A549 (cell line): ENCODE measurements at regions of chr6 and their contacts with region 1.

Region 1: GRCh38 chr6:97198046-97198565 is 84.9 kb downstream of the MMS22L start:
- DNase-seq: no peak
- ATAC-seq: no peak
- H3K4me3 ChIP-seq: no peak overlapping the region
- H3K27ac ChIP-seq: no peak overlapping the region
- H3K4me1 ChIP-seq: no peaks in the 10 kb centered on the region
- CTCF ChIP-seq: no peak
- EP300 ChIP-seq: no peak
- POLR2A ChIP-seq: no peak
- RAD21 ChIP-seq: no peak

Region 2: DNA sequence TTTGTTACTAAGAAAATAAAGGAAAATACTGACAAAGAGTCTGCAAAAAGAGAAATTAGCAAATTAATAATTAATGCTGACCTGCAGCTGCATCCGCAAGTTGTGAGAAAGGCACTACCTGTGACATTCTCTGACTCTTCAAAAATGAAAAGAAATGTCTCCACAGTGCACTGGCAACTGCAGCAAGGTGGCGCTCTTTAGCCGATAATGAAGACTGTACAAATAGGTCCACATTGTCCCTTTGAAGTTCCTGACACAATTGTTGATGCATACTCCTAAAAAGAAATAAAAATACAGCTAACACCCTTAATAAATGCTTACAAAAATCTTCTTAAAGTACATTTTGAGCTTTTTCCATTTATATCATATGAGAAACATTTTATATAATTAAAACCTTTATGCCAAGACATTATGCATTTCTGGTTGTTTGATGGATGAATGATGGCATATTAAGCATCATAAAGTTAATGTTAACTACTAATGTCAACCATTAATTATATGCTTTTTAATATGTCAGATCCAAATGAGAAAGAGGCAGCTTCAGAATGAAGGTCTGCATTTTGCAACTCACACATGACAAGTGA is 11.6 kb before region 1 on chr6:
- CTCF ChIA-PET with region 1: interaction called, 13 read pairs
- POLR2A ChIA-PET with region 1: no interaction called
- DNase-seq: peak; percentile 6 to 56
- ATAC-seq: peak; percentile 78 to 89; a peak in 5 of 6 replicates
- H3K4me3 ChIP-seq: no peak overlapping the region
- H3K27ac ChIP-seq: no peak overlapping the region
- H3K4me1 ChIP-seq: no peaks in the 10 kb centered on the region
- CTCF ChIP-seq: peak; percentile 79
- EP300 ChIP-seq: no peak
- POLR2A ChIP-seq: no peak
- RAD21 ChIP-seq: peak; percentile 68 to 69